ENCODE measurements at regions of chr19 and their contacts with region 1.

Region 1: DNA sequence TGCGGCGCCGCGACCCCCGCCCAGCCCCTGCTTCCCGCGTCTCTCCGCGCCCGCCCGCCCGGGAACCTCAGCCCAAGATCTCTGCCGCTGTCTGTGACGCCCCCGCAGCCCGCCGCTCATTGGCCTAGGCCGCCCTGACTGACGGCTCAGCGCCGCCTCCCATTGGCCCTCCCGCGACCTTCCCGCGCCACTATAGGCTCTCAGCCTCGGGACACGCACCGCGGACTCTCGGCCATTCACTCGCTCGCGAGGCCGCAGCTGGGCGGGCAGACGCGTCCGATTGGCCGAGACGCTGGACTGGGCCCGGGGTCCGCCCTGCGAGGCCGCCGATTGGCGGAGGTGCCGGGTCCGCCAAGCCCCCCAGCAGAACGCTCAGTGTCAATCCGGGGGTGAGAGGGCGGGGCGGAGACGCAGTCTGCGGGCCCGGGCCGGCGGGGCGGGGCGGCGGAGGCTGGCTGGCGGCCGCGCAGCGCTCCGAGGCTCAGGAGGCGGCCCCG is at the start of gene PRKACA:
- DNase-seq: peak; percentile 94 to 99 (median 97)
- ATAC-seq: peak; percentile 87
- H3K4me3 ChIP-seq: peak within 1 kb of the TSS; percentile 86
- H3K4me3 Mint-ChIP-seq: peak within 1 kb of the TSS; percentile 97
- H3K27ac ChIP-seq: peak within 1 kb of the TSS; percentile 65 to 83
- H3K27ac Mint-ChIP-seq: peak within 1 kb of the TSS; percentile 93
- H3K4me1 ChIP-seq: peaks cover 59% of the 10 kb centered on the region
- H3K4me1 Mint-ChIP-seq: peaks cover 55% of the 10 kb centered on the region
- H3K27me3 ChIP-seq: no peaks in the 10 kb centered on the region
- H3K27me3 Mint-ChIP-seq: no peaks in the 10 kb centered on the region
- CTCF ChIP-seq: no peak
- total RNA-seq, gene PRKACA: 27.4 to 29.8 TPM

Region 2: GRCh38 chr19:14081325-14082093 is 36.2 kb before region 1 on chr19:
- CTCF ChIA-PET with region 1: interaction called, 4 read pairs
- POLR2A ChIA-PET with region 1: interaction called, 14 read pairs
- intact Hi-C with region 1: loop called in 1 of 2 experiments (anchors 5 kb)
- DNase-seq: peak; percentile 98 to 100 (median 99)
- ATAC-seq: peak; percentile 94
- H3K4me3 ChIP-seq: peak overlapping the region; percentile 81
- H3K4me3 Mint-ChIP-seq: peak overlapping the region; percentile 91
- H3K27ac ChIP-seq: peak overlapping the region; percentile 73 to 74
- H3K27ac Mint-ChIP-seq: peak overlapping the region; percentile 73
- H3K4me1 ChIP-seq: peaks cover 23% of the 10 kb centered on the region
- H3K4me1 Mint-ChIP-seq: peaks cover 14% of the 10 kb centered on the region
- H3K27me3 ChIP-seq: no peaks in the 10 kb centered on the region
- H3K27me3 Mint-ChIP-seq: no peaks in the 10 kb centered on the region
- CTCF ChIP-seq: no peak

Region 3: DNA sequence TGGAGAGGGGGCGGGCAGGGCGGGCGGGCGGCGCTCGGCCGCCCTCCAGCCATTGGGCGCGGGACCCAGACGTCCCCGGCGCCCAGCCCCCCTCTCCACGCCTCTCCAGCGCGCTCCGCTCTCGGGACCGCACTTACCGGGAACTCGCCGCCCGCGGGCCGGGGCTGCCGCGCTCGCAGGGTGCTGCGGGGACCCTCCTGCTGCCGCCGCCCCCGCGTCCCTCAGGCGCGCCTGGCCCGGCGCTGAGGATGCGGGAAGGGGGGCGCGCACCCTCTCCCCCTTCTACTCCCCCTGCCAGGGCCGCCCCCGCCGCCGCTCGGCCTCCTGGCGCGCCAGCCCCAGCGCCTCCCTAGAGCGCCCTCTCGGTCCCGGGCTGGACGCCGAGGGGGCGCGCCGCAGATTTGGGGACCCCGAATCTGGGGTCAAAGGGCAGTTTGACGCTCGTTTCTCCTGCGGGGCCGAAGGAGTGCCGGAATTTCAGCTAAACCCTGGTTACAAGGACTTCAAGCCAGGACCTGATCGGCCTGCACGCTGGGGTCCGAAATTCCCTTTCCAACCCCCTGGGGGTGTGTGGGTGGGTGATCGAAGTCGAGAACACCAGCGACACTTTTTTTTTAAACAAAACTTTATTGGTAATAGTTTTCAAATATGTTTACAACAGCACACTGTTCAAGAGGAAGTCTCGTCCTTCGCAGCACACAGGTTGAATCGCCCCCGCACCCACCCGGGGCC is 26.5 kb before region 1 on chr19:
- CTCF ChIA-PET with region 1: interaction called, 3 read pairs
- POLR2A ChIA-PET with region 1: interaction called, 13 read pairs
- intact Hi-C with region 1: loop called (anchors 1 to 2 kb)
- DNase-seq: peak; percentile 37 to 85 (median 58)
- ATAC-seq: peak; percentile 49
- H3K4me3 ChIP-seq: peak overlapping the region; percentile 71
- H3K4me3 Mint-ChIP-seq: peak overlapping the region; percentile 100
- H3K27ac ChIP-seq: peak overlapping the region; percentile 43 to 84
- H3K27ac Mint-ChIP-seq: peak overlapping the region; percentile 87
- H3K4me1 ChIP-seq: peaks cover 21% of the 10 kb centered on the region
- H3K4me1 Mint-ChIP-seq: peaks cover 27% of the 10 kb centered on the region
- H3K27me3 ChIP-seq: no peaks in the 10 kb centered on the region
- H3K27me3 Mint-ChIP-seq: no peaks in the 10 kb centered on the region
- CTCF ChIP-seq: peak; percentile 27